CD14-positive monocyte (primary cell): ENCODE measurements at regions of chr20 and their contacts with region 1.

Region 1: GRCh38 chr20:22691369-22692118 is 107.2 kb upstream of the FOXA2 start:
- DNase-seq: peak; percentile 62 to 74 (median 73)
- H3K4me3 ChIP-seq: no peak overlapping the region
- H3K4me3 Mint-ChIP-seq: no peak overlapping the region
- H3K27ac ChIP-seq: no peak overlapping the region
- H3K27ac Mint-ChIP-seq: peak overlapping the region in 2 of 7 donors; percentile 35 to 54
- H3K4me1 ChIP-seq: peaks cover 25 to 38% of the 10 kb centered on the region in 2 donors
- H3K4me1 Mint-ChIP-seq: peaks cover 32% of the 10 kb centered on the region
- H3K27me3 ChIP-seq: no peaks in the 10 kb centered on the region
- H3K27me3 Mint-ChIP-seq: no peaks in the 10 kb centered on the region
- CTCF ChIP-seq: peak; percentile 92

Region 2: DNA sequence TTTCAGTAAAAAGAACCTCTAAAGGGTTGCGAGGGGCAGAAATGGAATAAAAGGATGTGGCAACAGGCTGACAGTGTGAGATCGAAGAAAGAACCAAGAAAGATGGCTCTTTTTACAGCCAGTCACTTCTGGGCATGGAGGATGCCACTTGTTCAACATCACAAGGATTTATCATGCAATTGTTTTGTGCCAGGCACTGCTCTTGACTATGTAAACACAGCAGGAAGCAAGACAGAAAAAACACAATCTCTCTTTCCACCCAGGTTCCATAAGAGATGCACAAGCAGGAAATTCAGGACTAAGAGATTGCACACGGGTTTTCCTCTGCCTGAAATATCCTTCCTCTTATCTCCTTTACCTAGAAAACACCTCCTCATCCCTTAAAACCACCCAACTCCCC is 145.2 kb before region 1 on chr20:
- intact Hi-C with region 1: no loop called
- DNase-seq: no peak
- H3K4me3 ChIP-seq: no peak overlapping the region
- H3K4me3 Mint-ChIP-seq: no peak overlapping the region
- H3K27ac ChIP-seq: no peak overlapping the region
- H3K27ac Mint-ChIP-seq: no peak overlapping the region
- H3K4me1 ChIP-seq: no peaks in the 10 kb centered on the region
- H3K4me1 Mint-ChIP-seq: no peaks in the 10 kb centered on the region
- H3K27me3 ChIP-seq: peaks cover 0 to 3% of the 10 kb centered on the region in 2 donors
- H3K27me3 Mint-ChIP-seq: peaks cover 5 to 9% (median 8%) of the 10 kb centered on the region in 3 donors
- CTCF ChIP-seq: no peak

Region 3: GRCh38 chr20:22630701-22631100 is 60.8 kb before region 1 on chr20:
- intact Hi-C with region 1: no loop called
- DNase-seq: no peak
- H3K4me3 ChIP-seq: no peak overlapping the region
- H3K4me3 Mint-ChIP-seq: no peak overlapping the region
- H3K27ac ChIP-seq: no peak overlapping the region
- H3K27ac Mint-ChIP-seq: no peak overlapping the region
- H3K4me1 ChIP-seq: no peaks in the 10 kb centered on the region
- H3K4me1 Mint-ChIP-seq: no peaks in the 10 kb centered on the region
- H3K27me3 ChIP-seq: no peaks in the 10 kb centered on the region
- H3K27me3 Mint-ChIP-seq: peaks cover 7 to 9% (median 7%) of the 10 kb centered on the region in 3 donors
- CTCF ChIP-seq: no peak

Region 4: GRCh38 chr20:23050847-23051631 is 359.5 kb after region 1 on chr20:
- intact Hi-C with region 1: loop called in 1 of 2 experiments (anchors 10 kb)
- DNase-seq: peak; percentile 72 to 86 (median 78)
- H3K4me3 ChIP-seq: peak overlapping the region; percentile 43 to 79 (median 50)
- H3K4me3 Mint-ChIP-seq: peak overlapping the region; percentile 88 to 93
- H3K27ac ChIP-seq: peak overlapping the region; percentile 45 to 91
- H3K27ac Mint-ChIP-seq: peak overlapping the region; percentile 88 to 97 (median 92)
- H3K4me1 ChIP-seq: peaks cover 43 to 57% of the 10 kb centered on the region in 2 donors
- H3K4me1 Mint-ChIP-seq: peaks cover 42% of the 10 kb centered on the region
- H3K27me3 ChIP-seq: peaks cover 0 to 11% of the 10 kb centered on the region in 2 donors
- H3K27me3 Mint-ChIP-seq: peaks cover 9 to 22% (median 20%) of the 10 kb centered on the region in 3 donors
- CTCF ChIP-seq: peak; percentile 97

Region 5: DNA sequence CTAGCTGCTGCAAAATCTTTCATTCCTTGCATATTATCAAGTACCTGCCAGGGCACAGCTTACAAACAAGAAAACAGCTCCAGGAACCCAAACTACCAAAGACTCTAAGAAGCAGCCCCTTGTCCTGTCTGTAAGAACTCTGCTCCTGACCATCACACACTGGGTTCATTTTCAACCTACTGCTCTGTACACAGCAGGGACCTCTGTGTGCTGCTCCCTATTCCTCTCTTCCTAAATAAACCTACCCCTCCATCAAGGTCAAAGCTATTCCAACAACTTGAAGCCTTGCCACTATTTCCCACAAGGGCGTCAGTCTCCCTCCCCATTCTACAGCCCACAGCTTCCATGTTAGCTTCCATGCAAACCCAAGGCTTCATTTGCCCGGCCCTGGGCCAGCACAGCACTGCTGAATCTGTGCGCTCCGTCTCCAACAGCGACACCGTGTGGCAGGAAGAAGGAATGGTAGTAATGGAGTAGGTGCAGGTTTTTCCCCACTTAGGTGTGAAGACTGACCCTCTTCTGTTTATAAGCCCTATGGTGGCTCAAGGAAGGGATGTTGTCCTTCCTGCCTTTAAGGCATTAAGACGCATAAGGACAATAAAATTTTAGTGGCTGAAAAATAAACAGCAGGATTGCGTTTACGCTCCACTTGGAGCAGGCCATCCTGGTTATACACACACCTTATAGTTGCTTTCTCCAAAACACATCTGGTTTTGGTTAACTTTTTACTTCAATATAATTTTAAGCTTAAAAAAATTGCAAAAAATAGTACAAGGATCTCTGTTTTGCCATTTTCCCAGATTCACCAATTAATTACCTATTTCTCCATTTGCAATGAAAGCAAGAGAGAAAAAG is 543.9 kb after region 1 on chr20:
- intact Hi-C with region 1: loop called (anchors 10 kb)
- DNase-seq: peak; percentile 66 to 78 (median 73)
- H3K4me3 ChIP-seq: no peak overlapping the region
- H3K4me3 Mint-ChIP-seq: no peak overlapping the region
- H3K27ac ChIP-seq: peak overlapping the region in 1 of 2 donors; percentile 18
- H3K27ac Mint-ChIP-seq: peak overlapping the region in 3 of 7 donors; percentile 53 to 92 (median 86)
- H3K4me1 ChIP-seq: peaks cover 22 to 29% of the 10 kb centered on the region in 2 donors
- H3K4me1 Mint-ChIP-seq: peaks cover 33% of the 10 kb centered on the region
- H3K27me3 ChIP-seq: no peaks in the 10 kb centered on the region
- H3K27me3 Mint-ChIP-seq: peaks cover 2 to 9% (median 7%) of the 10 kb centered on the region in 3 donors
- CTCF ChIP-seq: peak; percentile 94

Region 6: DNA sequence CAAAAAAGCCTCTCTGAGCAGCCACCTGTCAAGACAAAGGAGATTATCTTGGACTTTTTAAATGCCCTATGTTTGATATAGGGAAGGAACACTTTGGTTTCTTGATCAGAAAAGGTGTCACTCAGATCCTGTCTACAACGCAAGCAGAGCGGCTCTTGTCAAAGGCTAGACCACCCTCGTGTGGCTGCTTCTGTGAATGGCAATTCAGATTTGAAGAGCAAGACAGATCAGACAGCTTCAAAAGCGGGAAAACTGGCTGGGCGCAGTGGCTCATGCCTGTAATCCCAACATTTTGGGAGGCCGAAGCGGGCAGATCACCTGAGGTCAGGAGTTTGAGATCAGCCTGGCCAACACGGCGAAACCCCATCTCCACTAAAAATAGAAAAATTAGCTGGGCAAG is 649.0 kb after region 1 on chr20:
- intact Hi-C with region 1: loop called (anchors 5 to 10 kb)
- DNase-seq: peak; percentile 30 to 58 (median 42)
- H3K4me3 ChIP-seq: no peak overlapping the region
- H3K4me3 Mint-ChIP-seq: peak overlapping the region in 1 of 2 donors; percentile 26
- H3K27ac ChIP-seq: no peak overlapping the region
- H3K27ac Mint-ChIP-seq: no peak overlapping the region
- H3K4me1 ChIP-seq: no peaks in the 10 kb centered on the region
- H3K4me1 Mint-ChIP-seq: peaks cover 2% of the 10 kb centered on the region
- H3K27me3 ChIP-seq: no peaks in the 10 kb centered on the region
- H3K27me3 Mint-ChIP-seq: peaks cover 0 to 5% (median 0%) of the 10 kb centered on the region in 3 donors
- CTCF ChIP-seq: peak; percentile 80